ENCODE measurements at regions of chr7 and their contacts with region 1.

Region 1: GRCh38 chr7:45026984-45027773 is 27.2 kb downstream of the CCM2 start:
- DNase-seq: peak in 7 of 9 donors; percentile 42 to 79 (median 71)
- ATAC-seq: peak; percentile 81
- H3K4me3 ChIP-seq: peak overlapping the region; percentile 87
- H3K4me3 Mint-ChIP-seq: peak overlapping the region; percentile 89 to 98 (median 95)
- H3K27ac ChIP-seq: peak overlapping the region; percentile 86
- H3K27ac Mint-ChIP-seq: peak overlapping the region; percentile 80 to 97 (median 93)
- H3K4me1 ChIP-seq: peaks cover 34 to 57% of the 10 kb centered on the region in 2 donors
- H3K4me1 Mint-ChIP-seq: peaks cover 44 to 70% (median 62%) of the 10 kb centered on the region in 7 donors
- H3K27me3 ChIP-seq: no peaks in the 10 kb centered on the region
- H3K27me3 Mint-ChIP-seq: no peaks in the 10 kb centered on the region

Region 2: DNA sequence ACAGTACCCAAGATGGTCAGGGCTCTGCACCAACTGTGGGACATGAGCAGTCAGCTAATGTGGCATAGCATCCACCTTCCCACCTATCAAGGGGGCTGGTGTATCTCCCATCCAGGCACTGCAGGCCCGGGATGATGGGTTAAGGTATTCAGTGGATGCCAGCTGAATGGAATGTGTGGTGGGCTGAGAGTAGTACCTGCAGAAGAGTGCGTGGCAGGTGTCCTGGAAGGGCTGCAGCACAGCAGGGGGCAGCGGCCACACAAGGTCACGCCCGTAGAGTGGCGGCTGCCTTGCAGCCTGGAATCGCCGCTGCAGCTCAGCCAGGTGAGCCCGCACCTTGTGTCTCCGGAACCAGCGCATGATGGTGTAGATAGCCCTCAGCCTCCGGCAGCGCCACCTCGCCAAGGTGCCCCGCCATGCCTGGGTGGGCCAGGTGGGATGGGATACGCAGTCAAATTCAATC is 61.7 kb before region 1 on chr7:
- CTCF ChIA-PET with region 1: no interaction called
- POLR2A ChIA-PET with region 1: no interaction called
- intact Hi-C with region 1: no loop called
- DNase-seq: no peak
- ATAC-seq: no peak
- H3K4me3 ChIP-seq: no peak overlapping the region
- H3K4me3 Mint-ChIP-seq: no peak overlapping the region
- H3K27ac ChIP-seq: no peak overlapping the region
- H3K27ac Mint-ChIP-seq: peak overlapping the region in 4 of 9 donors; percentile 22 to 88 (median 51)
- H3K4me1 ChIP-seq: no peaks in the 10 kb centered on the region
- H3K4me1 Mint-ChIP-seq: peaks cover 0 to 13% (median 2%) of the 10 kb centered on the region in 7 donors
- H3K27me3 ChIP-seq: no peaks in the 10 kb centered on the region
- H3K27me3 Mint-ChIP-seq: no peaks in the 10 kb centered on the region

Region 3: GRCh38 chr7:44980393-44981034 is 46.7 kb before region 1 on chr7:
- CTCF ChIA-PET with region 1: interaction called, 4 read pairs
- POLR2A ChIA-PET with region 1: interaction called, 200 read pairs
- intact Hi-C with region 1: loop called (anchors 1 kb)
- DNase-seq: peak in 2 of 9 donors; percentile 63 to 69
- ATAC-seq: peak; percentile 38
- H3K4me3 ChIP-seq: peak overlapping the region; percentile 78
- H3K4me3 Mint-ChIP-seq: peak overlapping the region; percentile 39 to 100 (median 70)
- H3K27ac ChIP-seq: peak overlapping the region; percentile 83
- H3K27ac Mint-ChIP-seq: peak overlapping the region; percentile 85 to 99 (median 96)
- H3K4me1 ChIP-seq: peaks cover 60 to 63% of the 10 kb centered on the region in 2 donors
- H3K4me1 Mint-ChIP-seq: peaks cover 54 to 96% (median 68%) of the 10 kb centered on the region in 7 donors
- H3K27me3 ChIP-seq: no peaks in the 10 kb centered on the region
- H3K27me3 Mint-ChIP-seq: no peaks in the 10 kb centered on the region

Region 4: GRCh38 chr7:45007571-45008328 is 19.4 kb before region 1 on chr7:
- CTCF ChIA-PET with region 1: interaction called, 3 read pairs
- POLR2A ChIA-PET with region 1: interaction called, 348 read pairs
- intact Hi-C with region 1: loop called in 1 of 2 experiments (anchors 1 kb)
- DNase-seq: no peak
- ATAC-seq: no peak
- H3K4me3 ChIP-seq: no peak overlapping the region
- H3K4me3 Mint-ChIP-seq: peak overlapping the region in 3 of 10 donors; percentile 21 to 49 (median 34)
- H3K27ac ChIP-seq: no peak overlapping the region
- H3K27ac Mint-ChIP-seq: peak overlapping the region in 7 of 9 donors; percentile 4 to 74 (median 69)
- H3K4me1 ChIP-seq: peaks cover 3 to 6% of the 10 kb centered on the region in 2 donors
- H3K4me1 Mint-ChIP-seq: peaks cover 25 to 64% (median 54%) of the 10 kb centered on the region in 7 donors
- H3K27me3 ChIP-seq: no peaks in the 10 kb centered on the region
- H3K27me3 Mint-ChIP-seq: no peaks in the 10 kb centered on the region

Region 5: DNA sequence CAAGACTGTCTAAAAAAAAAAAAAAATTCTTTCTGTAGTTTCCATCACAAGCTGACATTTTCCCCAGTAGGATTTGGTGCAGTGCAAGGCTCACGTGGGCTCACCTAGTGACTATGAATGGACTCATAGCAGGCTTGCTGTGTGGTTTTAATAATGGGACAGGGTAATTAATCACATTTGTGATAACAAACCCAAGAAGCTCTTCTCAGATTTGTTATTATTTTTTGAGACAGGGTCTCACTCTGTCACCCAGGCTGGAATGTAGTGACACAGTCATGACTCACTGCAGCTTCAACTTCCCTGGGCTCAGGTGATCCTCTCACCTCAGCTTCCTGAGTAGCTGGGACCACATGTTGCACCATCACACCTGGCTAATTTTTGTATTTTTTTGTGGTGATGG is 21.6 kb after region 1 on chr7:
- CTCF ChIA-PET with region 1: no interaction called
- POLR2A ChIA-PET with region 1: interaction called, 11 read pairs
- intact Hi-C with region 1: loop called in 1 of 2 experiments (anchors 2 kb)
- DNase-seq: no peak
- ATAC-seq: no peak
- H3K4me3 ChIP-seq: no peak overlapping the region
- H3K4me3 Mint-ChIP-seq: no peak overlapping the region
- H3K27ac ChIP-seq: peak overlapping the region; percentile 12
- H3K27ac Mint-ChIP-seq: peak overlapping the region in 4 of 9 donors; percentile 5 to 62 (median 24)
- H3K4me1 ChIP-seq: peaks cover 3 to 6% of the 10 kb centered on the region in 2 donors
- H3K4me1 Mint-ChIP-seq: peaks cover 33 to 77% (median 65%) of the 10 kb centered on the region in 7 donors
- H3K27me3 ChIP-seq: no peaks in the 10 kb centered on the region
- H3K27me3 Mint-ChIP-seq: no peaks in the 10 kb centered on the region

Region 6: GRCh38 chr7:45563941-45564461 is 536.8 kb after region 1 on chr7:
- CTCF ChIA-PET with region 1: no interaction called
- POLR2A ChIA-PET with region 1: no interaction called
- intact Hi-C with region 1: no loop called
- DNase-seq: no peak
- ATAC-seq: no peak
- H3K4me3 ChIP-seq: no peak overlapping the region
- H3K4me3 Mint-ChIP-seq: no peak overlapping the region
- H3K27ac ChIP-seq: no peak overlapping the region
- H3K27ac Mint-ChIP-seq: no peak overlapping the region
- H3K4me1 ChIP-seq: no peaks in the 10 kb centered on the region
- H3K4me1 Mint-ChIP-seq: no peaks in the 10 kb centered on the region
- H3K27me3 ChIP-seq: no peaks in the 10 kb centered on the region
- H3K27me3 Mint-ChIP-seq: peaks cover 0 to 29% (median 11%) of the 10 kb centered on the region in 5 donors